ENCODE measurements at regions of chr15 and their contacts with region 1.

Region 1: DNA sequence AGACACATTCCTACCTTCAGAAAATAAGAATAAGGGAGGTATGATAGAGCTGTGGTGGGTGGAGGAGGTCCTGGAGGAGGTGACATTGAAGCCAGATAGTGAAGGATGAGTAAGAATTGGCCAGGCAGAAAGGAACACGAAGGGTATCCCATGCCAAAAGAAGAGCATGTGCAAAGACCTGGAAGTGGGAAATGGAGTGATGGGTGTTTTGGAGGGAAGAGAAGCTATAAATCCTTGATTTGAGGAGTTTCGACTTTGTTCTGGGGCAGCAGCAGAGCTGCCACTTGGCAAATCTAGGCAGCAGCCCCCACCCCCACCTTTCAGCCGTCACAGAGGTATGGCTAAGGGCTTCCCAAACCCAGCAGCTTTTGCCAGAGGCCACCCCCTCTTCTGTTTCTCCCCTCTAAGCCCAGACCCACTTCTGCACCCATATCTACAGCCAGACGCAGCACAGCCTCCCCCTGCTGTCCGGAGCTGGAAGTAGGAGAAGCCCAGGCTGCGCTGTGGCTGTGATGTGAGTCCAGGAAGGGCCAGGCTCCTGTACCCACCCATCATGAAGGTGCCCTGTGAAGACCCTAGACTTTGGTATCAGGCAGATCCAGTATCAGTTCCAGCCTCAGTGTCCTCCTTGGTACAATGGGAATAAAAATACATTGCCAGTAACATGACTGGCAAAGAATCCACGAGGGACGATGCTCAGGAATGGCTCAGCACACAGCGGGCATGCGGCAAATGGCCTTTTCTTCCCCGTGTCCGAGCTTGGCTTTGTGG is 188.7 kb upstream of the LINGO1 start:
- DNase-seq: peak; percentile 64 to 82 (median 79)
- H3K4me3 ChIP-seq: no peak overlapping the region
- H3K27ac ChIP-seq: no peak overlapping the region
- H3K4me1 ChIP-seq: peaks cover 0 to 17% (median 15%) of the 10 kb centered on the region in 4 experiments
- H3K27me3 ChIP-seq: peaks cover 3 to 67% (median 26%) of the 10 kb centered on the region in 5 experiments

Region 2: GRCh38 chr15:77633134-77633912 is 188.1 kb before region 1 on chr15:
- CTCF ChIA-PET with region 1: interaction called, 10 read pairs
- POLR2A ChIA-PET with region 1: no interaction called
- DNase-seq: peak; percentile 36 to 52 (median 44)
- H3K4me3 ChIP-seq: peak overlapping the region; percentile 26 to 72 (median 55)
- H3K27ac ChIP-seq: no peak overlapping the region
- H3K4me1 ChIP-seq: peaks cover 0 to 21% (median 14%) of the 10 kb centered on the region in 4 experiments
- H3K27me3 ChIP-seq: peaks cover 0 to 86% (median 44%) of the 10 kb centered on the region in 5 experiments

Region 3: GRCh38 chr15:77654975-77655374 is 166.4 kb before region 1 on chr15:
- CTCF ChIA-PET with region 1: interaction called, 19 read pairs
- POLR2A ChIA-PET with region 1: no interaction called
- DNase-seq: peak; percentile 15 to 45 (median 40)
- H3K4me3 ChIP-seq: no peak overlapping the region
- H3K27ac ChIP-seq: no peak overlapping the region
- H3K4me1 ChIP-seq: peaks cover 0 to 17% (median 12%) of the 10 kb centered on the region in 4 experiments
- H3K27me3 ChIP-seq: peaks cover 0 to 5% (median 0%) of the 10 kb centered on the region in 5 experiments

Region 4: GRCh38 chr15:77831986-77832385 is 10.6 kb after region 1 on chr15:
- CTCF ChIA-PET with region 1: interaction called, 21 read pairs
- POLR2A ChIA-PET with region 1: no interaction called
- DNase-seq: no peak
- H3K4me3 ChIP-seq: no peak overlapping the region
- H3K27ac ChIP-seq: no peak overlapping the region
- H3K4me1 ChIP-seq: peaks cover 0 to 10% (median 1%) of the 10 kb centered on the region in 4 experiments
- H3K27me3 ChIP-seq: peaks cover 0 to 6% (median 0%) of the 10 kb centered on the region in 5 experiments